Activated B cell treated with CpG ODN at 0.5 μM for 24 hours (primary cell): ENCODE measurements at regions of chr5 and their contacts with region 1.

Region 1: DNA sequence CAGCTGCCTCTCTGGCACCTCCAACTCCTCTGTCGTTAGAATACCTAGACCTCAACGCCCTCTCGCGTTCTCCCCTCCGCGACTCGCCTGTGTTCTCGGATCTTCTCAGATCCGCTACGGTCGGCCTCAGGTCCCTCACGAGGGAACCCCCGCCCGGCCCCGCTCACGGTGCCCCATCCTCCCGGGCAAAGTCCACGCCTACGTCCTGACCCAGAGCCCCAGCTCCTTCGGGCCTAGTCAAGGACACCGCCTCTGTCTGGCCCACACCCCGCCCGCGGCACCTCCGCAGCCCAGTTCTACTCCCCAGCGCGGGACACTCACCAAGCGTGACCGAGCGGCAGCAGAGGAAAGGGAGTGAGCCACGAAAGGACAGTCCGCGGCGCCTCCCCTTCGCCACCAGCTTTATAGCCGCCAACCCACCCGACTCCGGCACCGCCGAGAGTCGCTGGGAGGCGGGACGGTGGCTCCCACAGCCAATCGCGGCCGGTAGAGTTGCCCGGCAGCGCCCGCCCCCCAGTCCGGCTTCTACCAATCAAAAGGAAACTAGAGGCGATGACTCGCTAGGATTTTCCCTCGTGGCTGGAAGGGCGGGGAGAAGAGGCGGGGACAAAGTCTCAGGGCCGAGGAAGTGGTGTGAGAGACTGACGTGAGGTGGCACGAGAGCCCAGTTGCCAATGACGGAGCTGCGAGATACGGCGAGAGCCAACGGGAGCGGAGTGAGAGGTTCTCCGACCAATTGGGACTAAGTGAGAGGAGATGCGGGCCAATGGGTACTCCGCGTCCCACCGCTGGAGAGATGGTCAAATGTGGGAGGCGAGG is at the start of gene HMGCS1:
- DNase-seq: peak; percentile 98
- ATAC-seq: peak; percentile 86
- H3K4me3 Mint-ChIP-seq: peak within 1 kb of the TSS; percentile 99
- H3K27ac Mint-ChIP-seq: peak within 1 kb of the TSS; percentile 95
- H3K4me1 Mint-ChIP-seq: peaks cover 55% of the 10 kb centered on the region
- H3K27me3 Mint-ChIP-seq: no peaks in the 10 kb centered on the region
- CTCF ChIP-seq: no peak
- total RNA-seq, gene HMGCS1: 133 and 160 TPM in 2 replicates

Region 2: GRCh38 chr5:41869739-41870626 is 1443.3 kb before region 1 on chr5 and contains the start of gene OXCT1:
- CTCF ChIA-PET with region 1: no interaction called
- POLR2A ChIA-PET with region 1: no interaction called
- intact Hi-C with region 1: loop called (anchors 1 kb)
- DNase-seq: peak; percentile 82
- ATAC-seq: peak; percentile 95
- H3K4me3 Mint-ChIP-seq: peak within 1 kb of the TSS; percentile 93
- H3K27ac Mint-ChIP-seq: peak within 1 kb of the TSS; percentile 91
- H3K4me1 Mint-ChIP-seq: peaks cover 32% of the 10 kb centered on the region
- H3K27me3 Mint-ChIP-seq: no peaks in the 10 kb centered on the region
- CTCF ChIP-seq: no peak
- total RNA-seq, gene OXCT1: 27.3 and 27.4 TPM in 2 replicates

Region 3: DNA sequence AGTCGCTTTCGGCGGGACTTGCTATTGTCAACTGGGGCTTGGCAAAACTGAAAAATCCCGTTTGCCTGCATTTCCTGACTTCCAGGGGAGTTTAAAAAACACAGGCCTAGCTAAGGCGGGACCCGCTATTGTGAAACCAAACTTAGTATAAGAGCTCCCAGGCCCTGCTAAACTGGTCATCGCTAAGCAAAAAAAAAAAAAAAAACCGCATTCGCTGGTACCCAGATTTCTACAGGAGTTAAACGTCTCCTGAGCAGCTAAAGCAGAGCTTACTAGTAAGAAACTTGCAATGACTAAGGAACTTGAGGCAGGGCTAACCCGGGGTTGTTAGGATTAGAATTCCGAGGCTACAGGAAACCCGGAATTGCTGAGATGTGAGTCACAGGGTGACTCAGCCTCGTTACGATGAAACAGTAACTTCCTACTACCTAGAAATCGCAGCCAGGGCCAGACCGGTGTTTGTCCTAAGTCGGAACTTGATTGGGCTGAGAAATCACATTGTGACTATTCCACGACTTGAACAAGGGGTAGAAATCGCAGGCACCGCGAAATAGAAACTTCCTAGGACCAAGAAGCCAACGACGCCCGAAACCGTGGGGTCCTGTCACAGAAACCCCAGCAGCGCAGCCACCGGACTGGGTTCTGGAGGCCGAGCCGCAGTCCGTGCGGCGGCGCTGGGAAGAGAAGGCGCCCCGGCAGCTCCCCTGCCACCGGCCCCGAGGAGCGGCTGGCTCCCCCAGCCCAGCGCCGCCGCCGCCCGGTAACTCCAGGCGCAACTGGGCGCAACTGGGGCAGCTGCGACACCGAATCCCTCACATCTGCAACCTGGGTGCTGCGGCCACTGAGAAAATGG is 362.6 kb before region 1 on chr5:
- CTCF ChIA-PET with region 1: no interaction called
- POLR2A ChIA-PET with region 1: interaction called, 20 read pairs
- intact Hi-C with region 1: loop called (anchors 1 kb)
- DNase-seq: no peak
- ATAC-seq: peak; percentile 48
- H3K4me3 Mint-ChIP-seq: peak overlapping the region; percentile 94
- H3K27ac Mint-ChIP-seq: peak overlapping the region; percentile 98
- H3K4me1 Mint-ChIP-seq: peaks cover 33% of the 10 kb centered on the region
- H3K27me3 Mint-ChIP-seq: no peaks in the 10 kb centered on the region
- CTCF ChIP-seq: no peak

Region 4: DNA sequence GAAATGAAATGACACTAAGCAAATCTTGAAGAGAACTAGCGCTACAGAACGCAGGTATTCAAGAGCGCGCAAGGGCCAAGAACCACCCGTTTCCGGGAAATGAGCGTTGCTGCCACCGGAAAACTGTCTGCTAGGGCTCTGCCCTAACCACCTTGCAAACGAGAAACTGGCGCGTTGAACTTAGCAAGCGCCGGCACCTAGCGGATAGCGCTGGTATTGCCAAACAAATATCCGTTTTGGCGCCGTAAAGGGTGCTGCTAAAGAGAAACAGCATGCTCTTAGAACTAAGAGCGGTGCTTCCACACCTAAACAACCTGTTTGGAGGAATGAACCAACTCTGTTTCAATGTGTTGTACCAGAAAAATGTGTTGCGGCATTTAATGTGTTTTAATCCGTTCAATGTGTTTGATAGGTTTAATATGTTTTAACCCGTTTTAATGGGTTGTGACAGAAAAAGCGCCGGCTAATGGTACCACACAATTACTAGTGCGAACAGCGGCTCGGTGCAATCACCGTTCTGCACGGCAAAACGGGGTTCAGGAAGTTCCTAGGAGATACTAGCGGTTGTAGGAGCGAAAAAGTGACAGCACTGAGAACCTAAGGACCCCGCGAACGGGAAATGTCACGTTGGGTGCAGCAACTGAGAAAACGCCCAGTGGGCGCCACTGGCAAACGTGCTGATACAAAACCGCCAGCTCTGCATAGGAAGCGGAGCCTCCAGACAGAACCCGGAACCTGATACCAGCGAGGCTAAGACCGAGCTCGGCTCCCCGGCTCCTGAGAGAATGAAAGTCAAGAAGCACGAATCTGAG is 272.8 kb before region 1 on chr5 and contains the start of gene ANXA2R:
- CTCF ChIA-PET with region 1: interaction called, 3 read pairs
- POLR2A ChIA-PET with region 1: interaction called, 18 read pairs
- intact Hi-C with region 1: loop called (anchors 1 kb)
- DNase-seq: peak; percentile 78
- ATAC-seq: peak; percentile 62
- H3K4me3 Mint-ChIP-seq: peak within 1 kb of the TSS; percentile 96
- H3K27ac Mint-ChIP-seq: peak within 1 kb of the TSS; percentile 98
- H3K4me1 Mint-ChIP-seq: peaks cover 53% of the 10 kb centered on the region
- H3K27me3 Mint-ChIP-seq: no peaks in the 10 kb centered on the region
- CTCF ChIP-seq: peak; percentile 39
- total RNA-seq, gene ANXA2R: 6.7 and 7.9 TPM in 2 replicates

Region 5: GRCh38 chr5:43191740-43192557 is 121.3 kb before region 1 on chr5 and contains the start of gene NIM1K:
- CTCF ChIA-PET with region 1: no interaction called
- POLR2A ChIA-PET with region 1: no interaction called
- intact Hi-C with region 1: loop called (anchors 1 kb)
- DNase-seq: peak; percentile 45
- ATAC-seq: peak; percentile 65
- H3K4me3 Mint-ChIP-seq: peak within 1 kb of the TSS; percentile 84
- H3K27ac Mint-ChIP-seq: no peak within 1 kb of the TSS
- H3K4me1 Mint-ChIP-seq: peaks cover 28% of the 10 kb centered on the region
- H3K27me3 Mint-ChIP-seq: peaks cover 19% of the 10 kb centered on the region
- CTCF ChIP-seq: no peak
- total RNA-seq, gene NIM1K: 0.39 and 0.51 TPM in 2 replicates

Region 6: GRCh38 chr5:43252541-43252940 is 60.7 kb before region 1 on chr5:
- CTCF ChIA-PET with region 1: no interaction called
- POLR2A ChIA-PET with region 1: no interaction called
- intact Hi-C with region 1: no loop called
- DNase-seq: no peak
- ATAC-seq: no peak
- H3K4me3 Mint-ChIP-seq: no peak overlapping the region
- H3K27ac Mint-ChIP-seq: no peak overlapping the region
- H3K4me1 Mint-ChIP-seq: no peaks in the 10 kb centered on the region
- H3K27me3 Mint-ChIP-seq: peaks cover 11% of the 10 kb centered on the region
- CTCF ChIP-seq: no peak

Region 7: DNA sequence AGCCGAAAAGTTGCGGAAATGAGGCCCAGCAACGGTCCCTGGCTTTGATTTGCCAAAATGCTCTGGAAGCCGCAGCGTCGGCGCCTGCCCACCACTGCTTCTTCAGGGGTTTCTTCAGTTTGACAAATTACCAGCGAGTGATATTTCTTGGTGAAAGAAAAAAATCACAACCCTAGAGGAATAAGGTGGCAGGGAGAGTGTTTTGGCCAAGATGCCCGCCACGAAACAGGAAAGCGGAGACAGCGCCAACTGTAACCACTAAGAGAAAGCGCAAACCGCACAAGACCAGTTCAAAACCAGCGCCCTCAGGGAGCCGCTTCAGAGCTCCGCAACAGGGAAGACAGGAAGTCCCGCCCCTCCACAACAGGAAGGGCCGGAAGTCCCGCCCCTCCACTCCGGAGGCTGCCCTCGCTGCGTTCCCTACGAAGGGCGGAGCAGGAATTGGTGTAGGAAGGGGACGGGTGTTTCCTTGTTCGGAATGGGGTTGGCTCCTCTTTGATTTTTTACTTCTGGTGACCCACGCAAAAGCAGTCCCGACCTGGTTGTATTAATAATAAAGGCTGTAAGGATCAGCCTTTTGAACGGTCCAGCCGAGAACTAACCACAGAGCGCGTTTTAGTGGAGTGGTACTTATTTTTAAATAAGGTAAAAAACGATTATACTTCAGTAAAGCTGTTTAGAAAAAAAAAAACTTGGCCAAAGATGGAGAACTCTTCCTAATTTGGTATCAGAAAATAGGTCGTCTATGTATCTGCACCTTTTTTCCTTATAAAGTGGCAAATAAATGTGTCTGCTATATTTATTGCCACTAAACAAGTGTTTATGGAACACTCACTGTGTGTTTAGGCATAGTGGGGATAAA is 201.8 kb after region 1 on chr5 and contains the start of gene C5orf34:
- CTCF ChIA-PET with region 1: no interaction called
- POLR2A ChIA-PET with region 1: interaction called, 15 read pairs
- intact Hi-C with region 1: loop called (anchors 1 kb)
- DNase-seq: peak; percentile 92
- ATAC-seq: peak; percentile 96
- H3K4me3 Mint-ChIP-seq: peak within 1 kb of the TSS; percentile 95
- H3K27ac Mint-ChIP-seq: peak within 1 kb of the TSS; percentile 95
- H3K4me1 Mint-ChIP-seq: peaks cover 23% of the 10 kb centered on the region
- H3K27me3 Mint-ChIP-seq: no peaks in the 10 kb centered on the region
- CTCF ChIP-seq: no peak
- total RNA-seq, gene C5orf34: 4.4 and 4.7 TPM in 2 replicates